Naive thymus-derived CD4-positive, alpha-beta T cell (primary cell): ENCODE measurements at regions of chr19 and their contacts with region 1.

Region 1: GRCh38 chr19:40908976-40909375 is 26.9 kb upstream of the CYP2A7 start:
- DNase-seq: peak in 5 of 9 donors; percentile 31 to 64 (median 43)
- ATAC-seq: no peak
- H3K4me3 ChIP-seq: peak overlapping the region; percentile 60
- H3K4me3 Mint-ChIP-seq: peak overlapping the region in 9 of 10 donors; percentile 68 to 89 (median 83)
- H3K27ac ChIP-seq: no peak overlapping the region
- H3K27ac Mint-ChIP-seq: peak overlapping the region in 5 of 9 donors; percentile 46 to 95 (median 87)
- H3K4me1 ChIP-seq: peaks cover 0 to 10% of the 10 kb centered on the region in 2 donors
- H3K4me1 Mint-ChIP-seq: peaks cover 4 to 16% (median 11%) of the 10 kb centered on the region in 7 donors
- H3K27me3 ChIP-seq: no peaks in the 10 kb centered on the region
- H3K27me3 Mint-ChIP-seq: peaks cover 7 to 32% (median 13%) of the 10 kb centered on the region in 5 donors

Region 2: GRCh38 chr19:40813182-40813958 is 95.6 kb before region 1 on chr19:
- CTCF ChIA-PET with region 1: interaction called, 5 read pairs
- POLR2A ChIA-PET with region 1: no interaction called
- intact Hi-C with region 1: loop called in 1 of 2 experiments (anchors 2 kb)
- DNase-seq: no peak
- ATAC-seq: no peak
- H3K4me3 ChIP-seq: no peak overlapping the region
- H3K4me3 Mint-ChIP-seq: peak overlapping the region in 9 of 10 donors; percentile 9 to 100 (median 91)
- H3K27ac ChIP-seq: no peak overlapping the region
- H3K27ac Mint-ChIP-seq: peak overlapping the region in 5 of 9 donors; percentile 13 to 90 (median 86)
- H3K4me1 ChIP-seq: peaks cover 8 to 20% of the 10 kb centered on the region in 2 donors
- H3K4me1 Mint-ChIP-seq: peaks cover 33 to 55% (median 52%) of the 10 kb centered on the region in 7 donors
- H3K27me3 ChIP-seq: no peaks in the 10 kb centered on the region
- H3K27me3 Mint-ChIP-seq: peaks cover 0 to 42% (median 0%) of the 10 kb centered on the region in 5 donors

Region 3: DNA sequence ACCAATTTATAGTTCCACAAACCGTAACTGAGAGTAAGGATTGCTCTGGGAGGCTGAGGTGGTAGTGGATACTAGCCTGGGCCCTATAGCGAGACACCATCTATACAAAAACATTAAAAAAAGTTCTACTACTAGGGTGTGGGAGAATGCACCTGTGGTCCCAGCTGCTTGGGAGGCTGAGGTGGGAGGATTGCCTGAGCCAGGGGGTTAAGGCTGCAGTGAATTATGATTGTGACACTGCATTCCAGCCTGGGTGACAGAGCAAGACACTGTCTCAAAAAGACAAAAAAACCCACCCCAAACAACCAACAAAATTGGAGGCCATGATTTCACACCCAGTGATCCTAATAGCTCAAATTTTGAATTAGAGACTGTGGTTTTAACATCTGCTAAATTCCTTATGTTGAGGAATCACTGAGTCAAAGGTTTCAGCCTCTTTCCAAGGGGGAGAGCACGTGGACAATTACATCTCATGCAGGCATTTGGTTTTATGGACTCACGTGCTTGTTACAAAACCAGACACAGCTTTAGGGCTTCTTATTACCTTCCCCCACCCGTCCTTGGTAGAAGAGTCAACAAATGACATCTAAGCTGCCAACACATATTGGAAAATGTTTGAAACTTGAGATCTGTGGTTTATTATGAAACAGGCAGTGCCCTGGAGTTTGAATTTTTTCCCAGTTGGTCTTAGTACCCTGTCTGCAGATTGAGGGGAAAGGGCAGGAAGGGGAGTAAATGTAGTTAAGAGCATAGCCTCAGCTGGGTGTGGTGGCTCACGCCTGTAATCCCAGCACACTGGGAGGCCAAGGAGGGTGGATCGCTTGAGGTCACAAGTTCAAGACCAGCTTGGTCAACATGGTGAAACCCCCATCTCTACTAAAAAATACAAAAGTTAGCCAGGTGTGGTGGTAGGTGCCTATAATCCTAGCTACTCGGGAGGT is 77.2 kb before region 1 on chr19:
- CTCF ChIA-PET with region 1: no interaction called
- POLR2A ChIA-PET with region 1: interaction called, 11 read pairs
- intact Hi-C with region 1: loop called in 1 of 2 experiments (anchors 2 kb)
- DNase-seq: no peak
- ATAC-seq: no peak
- H3K4me3 ChIP-seq: no peak overlapping the region
- H3K4me3 Mint-ChIP-seq: peak overlapping the region in 1 of 10 donors; percentile 15
- H3K27ac ChIP-seq: no peak overlapping the region
- H3K27ac Mint-ChIP-seq: peak overlapping the region in 6 of 9 donors; percentile 59 to 85 (median 72)
- H3K4me1 ChIP-seq: peaks cover 5 to 11% of the 10 kb centered on the region in 2 donors
- H3K4me1 Mint-ChIP-seq: peaks cover 11 to 38% (median 27%) of the 10 kb centered on the region in 7 donors
- H3K27me3 ChIP-seq: no peaks in the 10 kb centered on the region
- H3K27me3 Mint-ChIP-seq: no peaks in the 10 kb centered on the region

Region 4: GRCh38 chr19:40862785-40863184 is 46.2 kb before region 1 on chr19:
- CTCF ChIA-PET with region 1: no interaction called
- POLR2A ChIA-PET with region 1: no interaction called
- intact Hi-C with region 1: no loop called
- DNase-seq: no peak
- ATAC-seq: no peak
- H3K4me3 ChIP-seq: no peak overlapping the region
- H3K4me3 Mint-ChIP-seq: no peak overlapping the region
- H3K27ac ChIP-seq: no peak overlapping the region
- H3K27ac Mint-ChIP-seq: no peak overlapping the region
- H3K4me1 ChIP-seq: no peaks in the 10 kb centered on the region
- H3K4me1 Mint-ChIP-seq: peaks cover 0 to 3% (median 0%) of the 10 kb centered on the region in 7 donors
- H3K27me3 ChIP-seq: no peaks in the 10 kb centered on the region
- H3K27me3 Mint-ChIP-seq: peaks cover 0 to 26% (median 4%) of the 10 kb centered on the region in 5 donors

Region 5: GRCh38 chr19:40921005-40921897 is 12.3 kb after region 1 on chr19:
- CTCF ChIA-PET with region 1: no interaction called
- POLR2A ChIA-PET with region 1: no interaction called
- intact Hi-C with region 1: no loop called
- DNase-seq: no peak
- ATAC-seq: no peak
- H3K4me3 ChIP-seq: no peak overlapping the region
- H3K4me3 Mint-ChIP-seq: no peak overlapping the region
- H3K27ac ChIP-seq: no peak overlapping the region
- H3K27ac Mint-ChIP-seq: no peak overlapping the region
- H3K4me1 ChIP-seq: no peaks in the 10 kb centered on the region
- H3K4me1 Mint-ChIP-seq: peaks cover 0 to 5% (median 0%) of the 10 kb centered on the region in 7 donors
- H3K27me3 ChIP-seq: no peaks in the 10 kb centered on the region
- H3K27me3 Mint-ChIP-seq: peaks cover 0 to 16% (median 0%) of the 10 kb centered on the region in 5 donors

Region 6: GRCh38 chr19:40974633-40975037 is 65.7 kb after region 1 on chr19:
- CTCF ChIA-PET with region 1: interaction called, 3 read pairs
- POLR2A ChIA-PET with region 1: interaction called, 3 read pairs
- intact Hi-C with region 1: loop called in 1 of 2 experiments (anchors 2 kb)
- DNase-seq: peak; percentile 54 to 84 (median 76)
- ATAC-seq: peak; percentile 87
- H3K4me3 ChIP-seq: no peak overlapping the region
- H3K4me3 Mint-ChIP-seq: peak overlapping the region in 1 of 10 donors; percentile 45
- H3K27ac ChIP-seq: no peak overlapping the region
- H3K27ac Mint-ChIP-seq: peak overlapping the region in 3 of 9 donors; percentile 53 to 74 (median 63)
- H3K4me1 ChIP-seq: peaks cover 16 to 19% of the 10 kb centered on the region in 2 donors
- H3K4me1 Mint-ChIP-seq: peaks cover 13 to 53% (median 27%) of the 10 kb centered on the region in 7 donors
- H3K27me3 ChIP-seq: no peaks in the 10 kb centered on the region
- H3K27me3 Mint-ChIP-seq: peaks cover 2 to 38% (median 3%) of the 10 kb centered on the region in 5 donors

Region 7: GRCh38 chr19:41144403-41144802 is 235.4 kb after region 1 on chr19:
- CTCF ChIA-PET with region 1: no interaction called
- POLR2A ChIA-PET with region 1: no interaction called
- intact Hi-C with region 1: loop called in 1 of 2 experiments (anchors 1 kb)
- DNase-seq: peak; percentile 68 to 88 (median 84)
- ATAC-seq: peak; percentile 96
- H3K4me3 ChIP-seq: no peak overlapping the region
- H3K4me3 Mint-ChIP-seq: no peak overlapping the region
- H3K27ac ChIP-seq: no peak overlapping the region
- H3K27ac Mint-ChIP-seq: peak overlapping the region in 4 of 9 donors; percentile 44 to 78 (median 58)
- H3K4me1 ChIP-seq: no peaks in the 10 kb centered on the region
- H3K4me1 Mint-ChIP-seq: peaks cover 0 to 3% (median 0%) of the 10 kb centered on the region in 7 donors
- H3K27me3 ChIP-seq: no peaks in the 10 kb centered on the region
- H3K27me3 Mint-ChIP-seq: peaks cover 0 to 29% (median 15%) of the 10 kb centered on the region in 5 donors